HepG2 (cell line): ENCODE measurements at regions of chr5 and their contacts with region 1.

Region 1: DNA sequence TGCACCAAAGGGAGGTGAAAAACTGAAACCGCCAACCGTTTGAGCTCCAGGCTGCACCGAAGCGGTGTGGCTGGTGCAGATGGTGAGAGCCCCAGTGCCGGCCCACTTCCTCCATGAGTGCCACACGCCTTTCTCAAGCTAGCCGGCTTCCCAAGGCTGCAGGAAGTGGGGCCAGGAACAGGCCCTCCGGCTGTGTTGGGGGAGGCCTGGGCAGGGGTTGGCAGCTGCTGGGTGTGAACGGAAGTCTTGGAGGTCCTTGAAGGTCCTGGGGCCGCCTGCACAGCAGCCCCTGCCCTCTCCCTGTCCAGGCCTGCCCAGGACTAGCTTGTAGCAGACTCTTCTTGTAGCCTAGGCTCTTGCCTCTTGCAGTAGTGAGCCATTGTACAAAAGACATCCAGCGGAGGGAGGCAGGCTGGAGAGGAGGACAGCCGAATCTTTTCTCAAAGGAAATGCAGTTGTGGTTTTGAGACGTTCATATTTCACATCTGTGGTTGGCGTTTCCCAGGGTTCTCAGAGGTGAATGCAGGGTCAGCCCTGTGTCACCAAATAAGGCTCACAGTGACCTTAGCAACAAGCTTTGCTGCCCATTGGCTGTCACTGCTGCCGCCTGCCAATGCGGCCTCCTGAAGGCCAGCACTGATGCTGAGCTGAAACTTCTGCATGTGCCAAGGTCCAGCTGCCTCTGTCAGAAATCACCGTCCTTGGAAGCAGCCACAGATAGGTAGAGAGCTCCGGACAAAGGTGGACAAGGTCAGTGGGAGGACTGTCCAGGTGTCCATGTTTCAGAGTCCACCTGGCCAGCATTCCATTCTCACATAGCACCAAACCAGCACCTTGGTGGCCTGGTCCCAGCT is 23.9 kb downstream of the IRF1 start:
- DNase-seq: peak; percentile 61
- ATAC-seq: peak; percentile 58
- H3K4me3 ChIP-seq: peak overlapping the region in 1 of 3 experiments; percentile 8; a peak in 1 of 6 replicates
- H3K27ac ChIP-seq: peak overlapping the region; percentile 46
- H3K4me1 ChIP-seq: peaks cover 92% of the 10 kb centered on the region
- H3K27me3 ChIP-seq: no peaks in the 10 kb centered on the region
- CTCF ChIP-seq: no peak
- EP300 ChIP-seq: no peak
- POLR2A ChIP-seq: no peak
- RAD21 ChIP-seq: no peak

Region 2: GRCh38 chr5:132064738-132065331 is 401.8 kb before region 1 on chr5:
- CTCF ChIA-PET with region 1: no interaction called
- POLR2A ChIA-PET with region 1: no interaction called
- in situ Hi-C with region 1: no loop called
- intact Hi-C with region 1: no loop called
- DNase-seq: peak; percentile 52
- ATAC-seq: peak; percentile 85
- H3K4me3 ChIP-seq: no peak overlapping the region
- H3K27ac ChIP-seq: no peak overlapping the region
- H3K4me1 ChIP-seq: peaks cover 9% of the 10 kb centered on the region
- H3K27me3 ChIP-seq: peaks cover 4 to 26% of the 10 kb centered on the region in 2 experiments; a peak in 3 of 5 replicates
- CTCF ChIP-seq: peak; percentile 84
- EP300 ChIP-seq: no peak
- POLR2A ChIP-seq: no peak
- RAD21 ChIP-seq: peak; percentile 28; the same call in 1 of the 2 replicates

Region 3: GRCh38 chr5:132363431-132364112 is 103.1 kb before region 1 on chr5:
- CTCF ChIA-PET with region 1: no interaction called
- POLR2A ChIA-PET with region 1: no interaction called
- in situ Hi-C with region 1: no loop called
- intact Hi-C with region 1: no loop called
- DNase-seq: no peak
- ATAC-seq: no peak
- H3K4me3 ChIP-seq: no peak overlapping the region
- H3K27ac ChIP-seq: no peak overlapping the region
- H3K4me1 ChIP-seq: no peaks in the 10 kb centered on the region
- H3K27me3 ChIP-seq: no peaks in the 10 kb centered on the region
- CTCF ChIP-seq: no peak
- EP300 ChIP-seq: no peak
- POLR2A ChIP-seq: no peak
- RAD21 ChIP-seq: no peak

Region 4: GRCh38 chr5:132419502-132420468 is 46.9 kb before region 1 on chr5:
- CTCF ChIA-PET with region 1: interaction called, 3 read pairs
- POLR2A ChIA-PET with region 1: interaction called, 9 read pairs
- in situ Hi-C with region 1: no loop called
- intact Hi-C with region 1: loop called (anchors 2 kb)
- DNase-seq: peak; percentile 54
- ATAC-seq: peak; percentile 77
- H3K4me3 ChIP-seq: no peak overlapping the region
- H3K27ac ChIP-seq: no peak overlapping the region
- H3K4me1 ChIP-seq: peaks cover 52% of the 10 kb centered on the region
- H3K27me3 ChIP-seq: no peaks in the 10 kb centered on the region
- CTCF ChIP-seq: peak; percentile 89
- EP300 ChIP-seq: no peak
- POLR2A ChIP-seq: no peak
- RAD21 ChIP-seq: peak; percentile 89

Region 5: GRCh38 chr5:132456296-132457001 is 10.2 kb before region 1 on chr5:
- CTCF ChIA-PET with region 1: no interaction called
- POLR2A ChIA-PET with region 1: interaction called, 23 read pairs
- in situ Hi-C with region 1: no loop called
- intact Hi-C with region 1: no loop called
- DNase-seq: no peak
- ATAC-seq: peak; percentile 44
- H3K4me3 ChIP-seq: peak overlapping the region in 2 of 3 experiments; percentile 9 to 39; a peak in 1 of 6 replicates
- H3K27ac ChIP-seq: peak overlapping the region; percentile 37
- H3K4me1 ChIP-seq: peaks cover 68% of the 10 kb centered on the region
- H3K27me3 ChIP-seq: no peaks in the 10 kb centered on the region; a peak in 1 of 5 replicates
- CTCF ChIP-seq: no peak
- EP300 ChIP-seq: no peak
- POLR2A ChIP-seq: no peak
- RAD21 ChIP-seq: no peak

Region 6: GRCh38 chr5:132704875-132705274 is 238.2 kb after region 1 on chr5:
- CTCF ChIA-PET with region 1: no interaction called
- POLR2A ChIA-PET with region 1: no interaction called
- in situ Hi-C with region 1: no loop called
- intact Hi-C with region 1: no loop called
- DNase-seq: no peak
- ATAC-seq: no peak
- H3K4me3 ChIP-seq: no peak overlapping the region
- H3K27ac ChIP-seq: no peak overlapping the region
- H3K4me1 ChIP-seq: no peaks in the 10 kb centered on the region
- H3K27me3 ChIP-seq: no peaks in the 10 kb centered on the region
- CTCF ChIP-seq: no peak
- EP300 ChIP-seq: no peak
- POLR2A ChIP-seq: no peak
- RAD21 ChIP-seq: no peak